GM18951 (cell line): ENCODE measurements at regions of chr1 and their contacts with region 1.

Region 1: GRCh38 chr1:37859507-37860345 is at the start of gene MTF1:
- POLR2A ChIP-seq: peak; percentile 74

Region 2: DNA sequence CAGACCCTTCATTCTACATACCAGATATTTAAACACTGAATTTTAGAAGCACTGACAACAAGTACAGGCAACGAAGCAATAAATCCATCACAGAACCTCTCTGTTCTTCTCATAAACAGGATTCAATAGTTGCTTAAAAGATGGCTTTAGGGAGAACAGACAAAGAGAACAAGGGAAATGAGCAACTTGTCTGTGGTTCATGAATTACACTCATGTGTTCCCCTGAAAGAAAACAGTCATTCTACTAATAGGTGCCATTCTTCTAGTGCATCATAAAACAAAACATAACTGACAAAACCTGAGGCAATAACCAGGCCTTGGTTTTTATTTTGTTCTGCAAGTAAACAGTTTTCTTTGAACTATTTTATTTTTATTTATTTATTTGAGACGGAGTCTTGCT is 270.8 kb before region 1 on chr1:
- in situ Hi-C with region 1: loop called (anchors 10 kb)
- POLR2A ChIP-seq: no peak